ENCODE measurements at regions of chr3 and their contacts with region 1.

Region 1: DNA sequence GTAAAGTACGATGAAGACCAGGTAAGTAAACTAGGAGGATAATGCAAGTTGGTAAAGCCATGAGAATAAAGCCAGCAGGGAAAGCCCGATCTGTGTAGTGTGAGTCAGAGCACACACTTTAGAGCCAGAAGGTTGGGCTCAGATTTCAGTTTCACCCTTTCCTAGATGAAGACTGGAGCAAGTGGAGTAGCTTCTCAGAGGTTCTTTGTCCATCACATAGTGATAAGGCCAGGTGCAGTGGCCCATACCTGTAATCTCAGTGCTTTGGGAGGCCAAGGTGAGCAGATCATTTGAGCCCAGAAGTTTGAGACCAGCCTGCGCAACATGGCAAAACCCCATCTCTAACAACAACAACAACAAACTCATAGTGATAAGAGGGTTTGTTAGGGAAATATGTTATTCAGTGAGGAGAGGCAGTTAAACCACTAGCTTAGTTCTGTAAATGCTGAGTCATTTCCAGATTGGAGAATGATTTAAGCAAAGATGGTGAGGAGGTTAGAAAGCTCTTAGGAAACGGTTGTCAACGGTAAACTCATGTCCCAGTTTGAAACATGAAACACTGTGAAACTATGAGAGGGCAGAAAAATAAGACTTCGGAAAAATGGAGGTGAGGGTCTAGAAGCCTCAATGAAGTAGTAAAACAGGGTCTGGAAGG is 39.0 kb downstream of the IL12A start:
- DNase-seq: no peak
- ATAC-seq: peak; percentile 39; the same call in 2 of the 3 replicates
- H3K4me3 ChIP-seq: no peak overlapping the region
- H3K27ac ChIP-seq: no peak overlapping the region
- H3K4me1 ChIP-seq: no peaks in the 10 kb centered on the region
- H3K27me3 ChIP-seq: peaks cover 0 to 5% of the 10 kb centered on the region in 2 experiments; a peak in 1 of 5 replicates
- CTCF ChIP-seq: no peak
- EP300 ChIP-seq: no peak
- POLR2A ChIP-seq: no peak
- RAD21 ChIP-seq: no peak

Region 2: DNA sequence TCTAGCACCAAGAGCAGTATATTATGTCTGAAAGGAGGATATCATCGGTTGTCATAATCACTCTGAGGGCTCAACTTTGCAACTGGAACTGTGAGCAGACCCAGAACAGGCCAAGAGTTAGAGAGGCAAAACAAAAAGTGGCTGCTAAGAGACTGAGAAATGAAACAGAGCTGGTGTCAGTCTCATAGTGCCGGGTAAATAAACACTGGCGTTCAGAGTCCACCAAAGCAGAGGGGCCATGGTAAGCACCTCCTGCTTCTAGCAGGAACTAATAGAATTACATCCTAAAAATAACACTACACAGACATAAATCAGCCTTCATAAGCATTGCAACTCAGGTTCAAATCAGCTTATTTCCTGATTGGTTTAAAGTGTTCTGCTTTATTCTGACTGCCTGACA is 49.3 kb before region 1 on chr3:
- CTCF ChIA-PET with region 1: no interaction called
- POLR2A ChIA-PET with region 1: no interaction called
- in situ Hi-C with region 1: no loop called
- intact Hi-C with region 1: loop called (anchors 1 kb)
- DNase-seq: peak; percentile 80
- ATAC-seq: peak; percentile 99
- H3K4me3 ChIP-seq: peak overlapping the region in 2 of 3 experiments; percentile 1 to 32; a peak in 1 of 6 replicates
- H3K27ac ChIP-seq: peak overlapping the region; percentile 74
- H3K4me1 ChIP-seq: peaks cover 38% of the 10 kb centered on the region
- H3K27me3 ChIP-seq: no peaks in the 10 kb centered on the region
- CTCF ChIP-seq: no peak
- EP300 ChIP-seq: peak in 1 of 2 experiments; percentile 61; a peak in 1 of 4 replicates
- POLR2A ChIP-seq: no peak; a peak in 1 of 4 replicates
- RAD21 ChIP-seq: no peak

Region 3: DNA sequence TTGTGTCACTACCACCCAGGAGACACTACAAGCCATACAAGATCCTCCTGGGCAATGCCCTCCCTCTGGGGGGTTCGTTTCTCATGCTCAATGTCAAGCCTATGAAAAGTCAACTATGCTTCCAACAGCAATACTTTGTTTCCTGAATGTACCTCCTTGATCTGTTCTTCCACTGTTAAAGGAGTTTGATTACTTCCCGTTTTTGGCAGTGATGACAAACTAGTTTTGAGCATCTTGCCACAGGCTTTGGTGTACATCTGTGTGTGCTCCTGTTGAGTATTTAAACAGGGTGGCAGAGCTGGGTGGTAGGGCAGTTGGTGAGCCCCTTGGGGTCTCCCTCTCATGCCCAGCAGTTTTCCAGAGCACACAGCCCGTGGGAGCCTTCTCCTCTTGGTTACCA is 42.3 kb after region 1 on chr3:
- CTCF ChIA-PET with region 1: no interaction called
- POLR2A ChIA-PET with region 1: no interaction called
- in situ Hi-C with region 1: no loop called
- intact Hi-C with region 1: no loop called
- DNase-seq: no peak
- ATAC-seq: no peak
- H3K4me3 ChIP-seq: no peak overlapping the region
- H3K27ac ChIP-seq: no peak overlapping the region
- H3K4me1 ChIP-seq: no peaks in the 10 kb centered on the region
- H3K27me3 ChIP-seq: 0 out of 5 replicates have a peak, but pooled peaks cover 0 to 5% of the 10 kb centered on the region in 2 experiments
- CTCF ChIP-seq: no peak
- EP300 ChIP-seq: no peak
- POLR2A ChIP-seq: no peak
- RAD21 ChIP-seq: no peak

Region 4: DNA sequence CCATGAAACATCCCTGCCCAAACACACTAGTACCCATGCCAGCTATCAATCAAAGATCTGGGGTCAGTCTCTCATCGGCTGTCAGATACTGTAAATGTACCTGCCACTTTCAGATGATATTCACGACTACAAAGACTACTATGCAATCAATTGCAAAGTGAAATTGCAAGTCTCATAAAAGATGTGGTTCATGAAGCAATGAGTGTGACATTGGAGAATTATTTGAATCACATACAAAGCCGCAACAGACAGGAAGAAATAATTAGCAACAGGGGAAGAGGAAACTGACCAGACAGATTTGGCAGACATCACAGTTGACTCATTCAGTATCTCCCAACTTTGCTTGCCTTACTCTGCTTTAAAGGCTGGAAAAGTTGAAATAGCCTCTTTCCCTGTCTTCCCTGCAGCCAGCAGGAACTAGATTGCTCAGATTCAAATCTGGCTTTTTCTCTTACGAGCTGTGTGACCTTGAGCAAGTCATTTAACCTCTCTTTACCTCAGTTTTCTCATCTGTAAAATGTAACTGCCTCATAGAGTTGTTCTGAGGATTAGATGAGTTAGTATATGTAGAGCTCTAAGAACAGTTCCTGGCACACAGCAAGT is 101.9 kb after region 1 on chr3:
- CTCF ChIA-PET with region 1: interaction called, 14 read pairs
- POLR2A ChIA-PET with region 1: no interaction called
- in situ Hi-C with region 1: no loop called
- intact Hi-C with region 1: loop called (anchors 1 kb)
- DNase-seq: no peak
- ATAC-seq: no peak
- H3K4me3 ChIP-seq: no peak overlapping the region
- H3K27ac ChIP-seq: no peak overlapping the region
- H3K4me1 ChIP-seq: no peaks in the 10 kb centered on the region
- H3K27me3 ChIP-seq: no peaks in the 10 kb centered on the region
- CTCF ChIP-seq: no peak
- EP300 ChIP-seq: no peak
- POLR2A ChIP-seq: no peak
- RAD21 ChIP-seq: no peak

Region 5: DNA sequence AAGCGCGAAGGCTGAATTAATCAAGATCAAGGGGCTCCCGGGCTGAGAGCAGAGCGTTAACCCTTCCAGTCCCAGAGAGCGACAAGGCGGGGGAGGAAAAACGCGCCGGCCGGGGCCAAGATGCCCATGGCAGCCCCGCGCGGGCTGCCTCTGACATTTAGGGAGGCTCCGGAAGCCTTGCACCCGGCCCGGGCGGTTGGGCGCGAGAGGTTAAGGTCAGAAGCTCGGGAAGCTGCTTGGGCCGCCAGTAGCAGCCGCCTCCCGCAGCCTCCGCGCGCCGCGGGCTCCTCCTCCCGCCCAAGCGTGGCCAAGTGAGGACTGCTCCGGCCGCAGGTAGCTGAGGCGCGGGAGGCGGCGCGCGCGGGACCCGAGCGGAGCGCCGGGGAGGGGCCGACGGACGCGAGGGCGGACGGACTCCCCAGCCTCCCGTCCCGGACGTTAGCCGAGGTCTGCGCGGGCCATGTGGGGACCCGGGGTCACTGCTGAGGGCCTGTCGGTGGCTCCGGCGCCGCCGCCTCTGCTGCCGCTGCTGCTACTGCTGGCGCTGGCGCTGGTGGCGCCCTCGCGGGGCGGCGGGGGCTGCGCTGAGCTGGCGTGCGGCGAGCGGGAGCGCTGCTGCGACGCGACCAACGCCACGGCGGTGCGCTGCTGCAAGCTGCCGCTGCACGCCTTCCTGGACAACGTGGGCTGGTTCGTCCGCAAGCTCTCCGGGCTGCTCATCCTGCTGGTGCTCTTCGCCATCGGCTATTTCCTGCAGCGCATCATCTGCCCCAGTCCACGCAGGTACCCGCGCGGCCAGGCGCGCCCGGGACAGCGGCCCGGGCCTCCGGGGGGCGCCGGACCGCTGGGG is 197.7 kb after region 1 on chr3 and contains the start of gene C3orf80:
- CTCF ChIA-PET with region 1: interaction called, 3 read pairs
- POLR2A ChIA-PET with region 1: no interaction called
- in situ Hi-C with region 1: no loop called
- intact Hi-C with region 1: loop called (anchors 5 kb)
- DNase-seq: peak; percentile 12
- ATAC-seq: peak; percentile 95
- H3K4me3 ChIP-seq: peak within 1 kb of the TSS; percentile 57 to 73 (median 59); a peak in 5 of 6 replicates
- H3K27ac ChIP-seq: no peak within 1 kb of the TSS
- H3K4me1 ChIP-seq: peaks cover 13% of the 10 kb centered on the region
- H3K27me3 ChIP-seq: peaks cover 8 to 33% of the 10 kb centered on the region in 2 experiments
- CTCF ChIP-seq: peak; percentile 47
- EP300 ChIP-seq: no peak
- POLR2A ChIP-seq: no peak
- RAD21 ChIP-seq: peak; percentile 38; the same call in 1 of the 2 replicates
- total RNA-seq, gene C3orf80: 0.04 TPM in 1 of 2 replicates, not detected in the other

Region 6: DNA sequence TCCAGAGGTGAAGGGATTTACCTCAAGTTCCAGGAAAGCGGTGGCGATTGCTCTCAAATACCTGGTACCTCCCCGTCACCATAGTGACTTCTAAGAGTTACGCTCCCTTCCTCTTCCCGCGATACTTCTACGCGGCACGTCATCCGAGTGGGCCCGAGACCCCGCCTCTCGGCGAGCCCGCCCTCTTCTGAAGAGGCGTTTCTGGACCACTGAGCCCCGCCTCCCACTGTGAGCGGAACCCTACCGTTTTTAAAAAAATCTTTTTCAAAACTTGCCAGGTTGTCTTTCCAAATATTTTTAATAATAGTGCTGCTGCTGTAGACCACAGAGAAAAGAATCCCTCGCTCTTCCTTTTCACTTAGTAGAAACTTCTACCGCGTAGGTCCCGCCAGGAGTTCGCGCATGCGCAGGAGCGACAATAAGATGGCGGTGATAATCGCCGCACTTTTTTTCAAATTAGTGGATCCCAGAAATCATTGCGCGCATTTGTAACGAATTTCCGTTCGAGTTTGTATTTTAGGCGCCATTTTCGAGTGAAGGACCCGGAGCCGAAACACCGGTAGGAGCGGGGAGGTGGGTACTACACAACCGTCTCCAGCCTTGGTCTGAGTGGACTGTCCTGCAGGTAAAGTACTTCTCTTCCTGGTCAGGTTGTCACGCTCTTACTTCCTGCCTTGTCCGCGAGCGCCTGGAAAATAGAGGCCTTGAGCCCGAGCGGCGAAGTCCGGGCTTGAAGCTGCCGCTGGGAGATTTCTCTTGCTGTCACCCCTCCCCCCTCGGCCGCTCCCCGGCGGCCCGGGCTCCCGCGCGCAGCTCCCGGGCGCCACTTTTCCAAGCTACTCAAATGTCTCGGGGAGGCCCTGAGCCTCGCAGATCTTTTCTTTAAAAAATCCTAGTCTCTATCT is 371.7 kb after region 1 on chr3 and contains the starts of genes IFT80 and SMC4:
- CTCF ChIA-PET with region 1: no interaction called
- POLR2A ChIA-PET with region 1: no interaction called
- in situ Hi-C with region 1: loop called (anchors 25 kb)
- intact Hi-C with region 1: no loop called
- DNase-seq: peak; percentile 92
- ATAC-seq: peak; percentile 92
- H3K4me3 ChIP-seq: peak within 1 kb of the TSS; percentile 87 to 94 (median 94)
- H3K27ac ChIP-seq: peak within 1 kb of the TSS; percentile 98
- H3K4me1 ChIP-seq: peaks cover 27% of the 10 kb centered on the region
- H3K27me3 ChIP-seq: no peaks in the 10 kb centered on the region; a peak in 1 of 5 replicates
- CTCF ChIP-seq: no peak
- EP300 ChIP-seq: 0 out of 4 replicates have a peak, but pooled peaks of 1 of the 2 experiments have one; percentile 21
- POLR2A ChIP-seq: peak; percentile 80 to 92
- RAD21 ChIP-seq: no peak
- total RNA-seq, gene IFT80: 15.7 and 21.4 TPM in 2 replicates
- total RNA-seq, gene SMC4: 74.3 and 95.5 TPM in 2 replicates